HepG2 (cell line): ENCODE measurements at regions of chr9 and their contacts with region 1.

Region 1: DNA sequence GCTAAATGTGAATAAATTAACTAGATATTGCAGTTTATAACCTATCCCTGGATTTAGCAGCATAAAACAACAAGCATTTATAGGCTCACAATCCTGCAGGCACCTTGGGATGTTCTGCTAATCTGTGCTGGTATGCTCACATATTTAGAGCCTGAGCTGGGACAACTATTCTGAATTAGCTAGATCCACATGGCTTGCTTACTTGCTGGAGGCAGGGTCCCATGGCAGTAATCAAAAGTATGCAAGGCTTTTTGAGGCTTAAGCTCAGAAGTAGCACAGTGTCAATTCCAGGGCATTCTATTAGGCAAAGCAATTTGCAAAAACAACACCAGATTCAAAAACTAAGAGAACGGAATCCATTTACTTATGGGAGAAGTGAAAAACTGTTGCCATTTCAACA is 745.0 kb upstream of the ACO1 start:
- DNase-seq: no peak
- ATAC-seq: no peak
- H3K4me3 ChIP-seq: no peak overlapping the region
- H3K27ac ChIP-seq: no peak overlapping the region
- H3K4me1 ChIP-seq: no peaks in the 10 kb centered on the region
- H3K27me3 ChIP-seq: no peaks in the 10 kb centered on the region
- CTCF ChIP-seq: no peak
- EP300 ChIP-seq: no peak
- POLR2A ChIP-seq: no peak
- RAD21 ChIP-seq: no peak

Region 2: GRCh38 chr9:30198463-30199309 is 1440.8 kb before region 1 on chr9:
- CTCF ChIA-PET with region 1: no interaction called
- POLR2A ChIA-PET with region 1: no interaction called
- in situ Hi-C with region 1: no loop called
- intact Hi-C with region 1: no loop called
- DNase-seq: no peak
- ATAC-seq: peak; percentile 43; the same call in 2 of the 3 replicates
- H3K4me3 ChIP-seq: peak overlapping the region in 1 of 3 experiments; percentile 20; a peak in 1 of 6 replicates
- H3K27ac ChIP-seq: no peak overlapping the region
- H3K4me1 ChIP-seq: no peaks in the 10 kb centered on the region
- H3K27me3 ChIP-seq: no peaks in the 10 kb centered on the region
- CTCF ChIP-seq: no peak
- EP300 ChIP-seq: no peak
- POLR2A ChIP-seq: no peak
- RAD21 ChIP-seq: no peak

Region 3: GRCh38 chr9:31597977-31598376 is 41.5 kb before region 1 on chr9:
- CTCF ChIA-PET with region 1: no interaction called
- POLR2A ChIA-PET with region 1: no interaction called
- in situ Hi-C with region 1: no loop called
- intact Hi-C with region 1: no loop called
- DNase-seq: peak; percentile 18
- ATAC-seq: no peak
- H3K4me3 ChIP-seq: no peak overlapping the region
- H3K27ac ChIP-seq: no peak overlapping the region
- H3K4me1 ChIP-seq: no peaks in the 10 kb centered on the region
- H3K27me3 ChIP-seq: no peaks in the 10 kb centered on the region
- CTCF ChIP-seq: no peak
- EP300 ChIP-seq: no peak
- POLR2A ChIP-seq: no peak
- RAD21 ChIP-seq: no peak

Region 4: GRCh38 chr9:31683116-31683515 is 43.7 kb after region 1 on chr9:
- CTCF ChIA-PET with region 1: no interaction called
- POLR2A ChIA-PET with region 1: no interaction called
- in situ Hi-C with region 1: loop called (anchors 10 kb)
- intact Hi-C with region 1: no loop called
- DNase-seq: no peak
- ATAC-seq: no peak
- H3K4me3 ChIP-seq: no peak overlapping the region
- H3K27ac ChIP-seq: no peak overlapping the region
- H3K4me1 ChIP-seq: no peaks in the 10 kb centered on the region
- H3K27me3 ChIP-seq: no peaks in the 10 kb centered on the region
- CTCF ChIP-seq: no peak
- EP300 ChIP-seq: no peak
- POLR2A ChIP-seq: no peak
- RAD21 ChIP-seq: no peak